ENCODE measurements at regions of chr7 and their contacts with region 1.

Region 1: DNA sequence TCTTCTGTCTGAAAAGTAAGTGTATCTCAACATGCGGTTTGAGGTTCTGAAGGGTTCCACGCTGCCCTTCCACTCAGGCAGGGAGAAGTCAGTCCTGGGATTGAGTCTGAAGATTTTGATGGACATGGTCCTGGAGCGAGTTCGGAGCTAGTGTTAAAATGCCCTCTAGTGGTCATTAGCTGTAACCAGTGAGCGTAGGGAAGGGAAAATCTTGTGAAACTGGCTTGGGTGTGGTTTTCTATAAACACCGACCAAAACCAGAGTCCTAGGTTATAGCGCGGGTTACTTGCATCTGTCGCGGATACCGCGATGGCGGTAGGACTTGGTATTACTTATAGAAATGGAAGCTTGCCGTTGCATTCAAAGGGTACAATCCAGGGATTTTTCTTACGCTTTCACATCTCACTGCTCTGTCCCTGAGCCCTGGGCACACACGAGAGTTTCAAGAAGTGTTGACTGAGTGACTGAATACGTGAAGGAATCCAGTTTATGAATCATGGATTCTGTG is 348.2 kb upstream of the C7orf33 start:
- DNase-seq: peak; percentile 76
- H3K4me3 Mint-ChIP-seq: no peak overlapping the region
- H3K27ac Mint-ChIP-seq: no peak overlapping the region
- H3K4me1 Mint-ChIP-seq: no peaks in the 10 kb centered on the region
- H3K27me3 Mint-ChIP-seq: peaks cover 89% of the 10 kb centered on the region
- CTCF ChIP-seq: peak; percentile 58

Region 2: DNA sequence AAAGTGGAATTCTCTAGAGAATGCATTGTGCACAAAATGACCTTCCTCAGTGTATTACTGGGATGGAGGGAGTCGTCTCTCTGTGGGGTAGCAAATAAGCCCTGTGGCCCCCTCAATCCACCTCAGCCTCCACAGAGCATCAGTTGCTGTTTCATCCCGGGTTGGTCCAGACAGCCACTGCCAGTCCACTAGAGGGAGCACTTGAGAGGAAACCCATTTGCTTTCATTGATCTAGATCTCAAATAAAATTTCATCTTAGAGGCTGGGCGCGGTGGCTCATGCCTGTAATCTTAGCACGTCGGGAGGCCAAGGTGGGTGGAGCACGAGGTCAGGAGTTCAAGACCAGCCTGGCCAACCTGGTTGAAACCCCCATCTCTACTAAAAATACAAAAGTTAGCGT is 997.1 kb before region 1 on chr7:
- CTCF ChIA-PET with region 1: interaction called, 4 read pairs
- POLR2A ChIA-PET with region 1: no interaction called
- intact Hi-C with region 1: loop called (anchors 5 kb)
- DNase-seq: peak; percentile 62
- H3K4me3 Mint-ChIP-seq: no peak overlapping the region
- H3K27ac Mint-ChIP-seq: no peak overlapping the region
- H3K4me1 Mint-ChIP-seq: no peaks in the 10 kb centered on the region
- H3K27me3 Mint-ChIP-seq: peaks cover 58% of the 10 kb centered on the region
- CTCF ChIP-seq: peak; percentile 70

Region 3: DNA sequence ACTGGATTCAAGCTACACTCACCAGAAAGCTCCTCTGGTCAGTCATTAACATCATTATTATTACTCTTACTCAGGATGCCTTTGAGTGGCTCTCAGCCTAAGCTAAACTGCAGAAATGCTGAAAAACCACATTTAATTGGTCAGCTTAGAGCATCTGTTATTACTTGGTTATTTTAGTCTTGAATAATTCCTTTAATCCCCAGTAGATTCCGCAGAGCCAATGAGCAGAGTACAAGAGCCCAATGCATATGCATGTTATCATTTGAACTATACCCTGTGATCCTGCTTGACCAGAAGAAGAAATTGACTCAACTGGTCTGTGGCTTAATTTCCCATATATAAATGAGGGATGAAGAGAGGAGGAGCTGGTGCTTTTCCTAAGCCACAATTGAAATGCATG is 69.4 kb before region 1 on chr7:
- CTCF ChIA-PET with region 1: interaction called, 10 read pairs
- POLR2A ChIA-PET with region 1: no interaction called
- intact Hi-C with region 1: no loop called
- DNase-seq: no peak
- H3K4me3 Mint-ChIP-seq: no peak overlapping the region
- H3K27ac Mint-ChIP-seq: no peak overlapping the region
- H3K4me1 Mint-ChIP-seq: no peaks in the 10 kb centered on the region
- H3K27me3 Mint-ChIP-seq: peaks cover 62% of the 10 kb centered on the region
- CTCF ChIP-seq: no peak

Region 4: DNA sequence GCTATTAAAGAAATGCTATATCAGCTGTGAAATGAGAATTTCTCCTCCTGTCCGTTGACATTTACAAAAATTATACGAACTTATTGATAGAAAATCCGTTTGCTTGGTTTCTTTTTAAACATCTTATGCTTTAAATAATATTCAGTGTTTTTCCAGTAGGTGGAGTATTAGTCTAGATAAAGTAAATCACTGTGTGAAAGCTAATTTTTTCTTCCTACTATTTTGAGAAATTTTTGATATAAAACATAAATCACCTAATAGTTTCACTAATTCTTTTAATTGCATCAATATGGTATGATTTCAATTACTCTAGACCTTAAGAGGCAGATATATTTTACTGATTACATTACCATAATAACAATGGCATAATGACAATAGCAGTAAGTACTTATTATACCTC is 13.0 kb after region 1 on chr7:
- CTCF ChIA-PET with region 1: interaction called, 35 read pairs
- POLR2A ChIA-PET with region 1: no interaction called
- intact Hi-C with region 1: no loop called
- DNase-seq: no peak
- H3K4me3 Mint-ChIP-seq: no peak overlapping the region
- H3K27ac Mint-ChIP-seq: no peak overlapping the region
- H3K4me1 Mint-ChIP-seq: no peaks in the 10 kb centered on the region
- H3K27me3 Mint-ChIP-seq: peaks cover 74% of the 10 kb centered on the region
- CTCF ChIP-seq: peak; percentile 42

Measured in MCF 10A (cell line).